Posterior vena cava (tissue), 2 donors: ENCODE measurements at regions of chr5 and their contacts with region 1.

Region 1: DNA sequence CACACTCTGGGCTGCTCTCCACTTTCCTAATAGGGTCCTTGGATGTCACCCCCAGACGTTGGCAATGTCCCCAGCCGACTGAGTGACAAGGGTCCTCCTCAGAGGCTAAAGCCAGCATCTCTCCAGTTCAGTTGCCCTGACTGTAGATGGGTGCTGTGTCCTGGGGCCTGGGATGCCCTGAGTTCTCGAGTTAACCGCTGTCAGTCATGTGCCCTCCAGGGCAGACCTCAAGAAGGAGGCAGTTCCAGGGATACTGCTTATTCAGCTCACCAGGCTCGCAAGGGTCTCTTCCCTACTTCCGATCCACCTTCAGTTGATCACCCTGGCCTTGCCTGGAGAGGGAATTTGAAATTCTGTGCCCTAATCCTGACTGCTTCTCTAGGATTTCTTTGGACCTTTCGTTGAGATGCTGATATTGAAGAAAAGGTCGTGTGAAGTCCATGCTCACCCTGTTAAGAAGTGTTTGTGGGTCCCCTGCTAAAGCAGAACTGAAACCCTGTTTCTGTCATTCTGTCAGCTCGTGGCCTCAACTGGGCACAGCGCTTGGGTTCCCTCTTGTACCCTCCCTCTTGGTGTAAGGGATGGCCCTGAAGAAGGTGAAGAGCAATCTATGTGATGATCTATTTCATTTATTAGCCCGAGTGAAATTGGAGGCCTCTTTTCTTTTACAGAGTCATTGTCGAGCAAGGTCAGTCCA is 55.8 kb downstream of the WWC1 start:
- DNase-seq: no peak

Region 2: DNA sequence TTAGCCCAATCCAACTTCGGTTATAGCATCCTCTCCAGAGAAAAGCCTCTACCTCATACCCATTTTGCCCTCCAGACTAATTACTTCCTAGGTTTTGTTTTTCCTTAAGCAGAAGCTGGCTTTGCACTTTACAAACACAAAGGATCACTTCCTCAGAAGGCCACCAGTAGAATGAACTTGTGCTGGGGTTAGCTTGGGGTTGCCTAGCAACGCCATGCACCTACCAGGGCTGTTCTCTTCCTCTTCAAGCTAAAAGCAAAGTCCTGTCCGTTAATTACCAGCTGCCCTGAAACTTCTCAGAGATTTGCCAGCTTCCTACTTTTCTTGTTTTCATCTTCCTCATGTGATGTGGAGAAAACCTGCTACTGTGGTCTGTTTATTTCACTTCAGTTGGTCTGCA is 187.8 kb before region 1 on chr5:
- intact Hi-C with region 1: no loop called
- DNase-seq: no peak

Region 3: DNA sequence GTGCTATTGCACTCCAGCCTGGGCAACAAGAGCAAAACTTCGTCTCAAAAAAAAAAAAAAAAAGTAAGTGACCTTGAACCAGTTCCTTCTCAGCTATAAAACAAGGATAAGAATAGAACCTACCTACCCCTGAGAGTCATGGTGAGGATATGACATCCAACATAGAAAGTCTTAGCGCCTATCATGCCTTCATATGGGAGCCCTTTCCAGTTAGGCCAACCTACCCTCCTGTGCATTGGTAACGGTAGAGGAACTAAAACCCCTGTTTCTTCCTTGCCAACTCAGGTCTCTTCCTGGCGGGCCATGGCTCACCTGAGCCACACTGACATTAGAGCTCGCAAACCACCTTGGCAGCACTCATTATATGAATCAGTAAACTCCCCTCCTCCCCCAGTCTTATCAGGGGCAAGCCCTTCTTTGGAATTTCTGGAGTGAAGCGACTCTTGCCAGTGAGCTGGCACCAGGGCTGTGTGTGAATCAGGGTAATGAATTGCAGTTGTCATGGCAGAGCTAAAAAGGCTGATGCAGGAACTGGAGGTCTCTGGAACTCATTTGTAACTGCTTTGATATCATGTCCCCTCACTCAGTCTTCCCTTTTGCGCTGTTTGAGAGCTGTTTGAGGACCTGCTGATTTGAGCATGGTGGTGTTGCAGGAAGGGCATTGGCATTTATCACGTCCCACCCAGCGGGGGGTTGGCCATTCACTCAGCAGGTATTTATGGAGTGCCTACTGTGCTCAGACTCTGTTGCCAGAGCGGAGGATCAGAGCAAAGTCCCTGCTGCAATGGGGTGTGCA is 45.4 kb before region 1 on chr5:
- intact Hi-C with region 1: no loop called
- DNase-seq: peak; percentile 50

Region 4: DNA sequence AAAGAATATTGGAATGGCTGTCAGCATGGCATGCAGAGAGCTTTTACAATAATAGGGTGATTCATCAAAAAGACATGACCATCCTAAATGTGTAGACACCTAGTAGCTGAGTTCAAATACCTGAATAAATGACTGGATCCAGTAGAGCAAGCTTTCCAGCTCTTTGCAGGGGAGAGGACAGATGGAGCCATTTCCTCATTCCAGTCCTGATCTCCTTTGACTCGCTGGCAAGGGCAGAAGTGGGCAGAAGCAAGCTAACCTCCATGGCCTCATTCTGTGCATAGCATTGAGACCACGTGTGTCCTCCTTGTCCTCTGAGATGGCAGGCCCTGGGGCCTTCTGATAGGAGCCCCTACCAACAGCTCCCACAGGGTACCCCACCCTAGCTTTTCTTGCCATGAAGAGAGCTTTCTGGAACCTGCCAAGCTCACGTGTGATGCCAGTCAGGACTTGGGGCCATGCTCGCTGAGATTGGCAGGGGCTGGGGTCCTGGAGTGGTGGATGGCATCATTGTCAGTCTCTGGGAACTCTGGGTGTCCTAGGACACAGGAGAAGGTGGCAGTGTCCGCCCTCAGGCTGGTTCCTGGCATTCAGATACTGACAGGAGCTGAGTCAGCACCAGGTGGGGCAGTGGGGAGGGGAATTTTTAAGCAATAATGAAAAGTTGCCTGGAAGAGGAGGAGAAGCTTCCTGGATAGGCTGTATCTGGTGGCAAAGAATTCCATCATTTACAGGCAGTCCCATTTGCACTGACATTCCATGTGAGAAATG is 22.2 kb before region 1 on chr5:
- intact Hi-C with region 1: loop called in 1 of 2 experiments (anchors 1 kb)
- DNase-seq: peak; percentile 54

Region 5: GRCh38 chr5:168486136-168486879 is 139.1 kb after region 1 on chr5 and contains the start of gene RARS1:
- intact Hi-C with region 1: no loop called
- DNase-seq: peak; percentile 98
- total RNA-seq, gene RARS1: 55.9 to 67.6 TPM